Gastrocnemius medialis (tissue), 4 donors: ENCODE measurements at regions of chr7 and their contacts with region 1.

Region 1: GRCh38 chr7:73433924-73434700 is 534 bp downstream of the FZD9 start:
- DNase-seq: no peak
- ATAC-seq: peak; percentile 53 to 56
- H3K4me3 ChIP-seq: peak overlapping the region; percentile 37 to 58 (median 54)
- H3K27ac ChIP-seq: peak overlapping the region in 2 of 4 donors; percentile 72 to 83
- H3K4me1 ChIP-seq: peaks cover 10 to 23% of the 10 kb centered on the region in 2 donors
- H3K27me3 ChIP-seq: no peaks in the 10 kb centered on the region
- CTCF ChIP-seq: peak in 1 of 5 experiments; percentile 6
- POLR2A ChIP-seq: peak in 1 of 2 donors; percentile 53

Region 2: DNA sequence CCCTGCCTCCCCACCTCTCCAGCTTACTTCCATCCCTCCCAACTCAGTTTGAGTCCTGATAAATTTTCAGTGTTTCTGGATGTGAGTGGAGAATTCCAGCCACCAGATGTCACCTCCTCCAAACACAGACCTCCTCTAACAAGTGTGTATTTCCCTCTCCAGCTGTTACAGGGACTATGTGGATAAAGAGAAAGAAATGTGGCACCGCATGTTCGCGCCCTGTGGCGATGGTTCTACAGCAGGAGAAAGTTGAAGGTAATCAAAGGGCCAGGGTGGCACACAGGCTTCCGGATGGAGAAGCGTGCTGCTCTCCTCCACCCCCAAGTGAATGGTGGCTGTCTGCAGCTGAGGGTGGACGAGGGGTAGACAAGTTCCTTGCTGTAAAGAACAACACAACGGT is 91.5 kb before region 1 on chr7:
- in situ Hi-C with region 1: no loop called
- intact Hi-C with region 1: loop called (anchors 5 kb)
- DNase-seq: no peak
- ATAC-seq: peak; percentile 90 to 95
- H3K4me3 ChIP-seq: peak overlapping the region in 2 of 4 donors; percentile 18 to 37
- H3K27ac ChIP-seq: no peak overlapping the region
- H3K4me1 ChIP-seq: no peaks in the 10 kb centered on the region
- H3K27me3 ChIP-seq: no peaks in the 10 kb centered on the region
- CTCF ChIP-seq: peak; percentile 42 to 70 (median 66)
- POLR2A ChIP-seq: no peak

Region 3: DNA sequence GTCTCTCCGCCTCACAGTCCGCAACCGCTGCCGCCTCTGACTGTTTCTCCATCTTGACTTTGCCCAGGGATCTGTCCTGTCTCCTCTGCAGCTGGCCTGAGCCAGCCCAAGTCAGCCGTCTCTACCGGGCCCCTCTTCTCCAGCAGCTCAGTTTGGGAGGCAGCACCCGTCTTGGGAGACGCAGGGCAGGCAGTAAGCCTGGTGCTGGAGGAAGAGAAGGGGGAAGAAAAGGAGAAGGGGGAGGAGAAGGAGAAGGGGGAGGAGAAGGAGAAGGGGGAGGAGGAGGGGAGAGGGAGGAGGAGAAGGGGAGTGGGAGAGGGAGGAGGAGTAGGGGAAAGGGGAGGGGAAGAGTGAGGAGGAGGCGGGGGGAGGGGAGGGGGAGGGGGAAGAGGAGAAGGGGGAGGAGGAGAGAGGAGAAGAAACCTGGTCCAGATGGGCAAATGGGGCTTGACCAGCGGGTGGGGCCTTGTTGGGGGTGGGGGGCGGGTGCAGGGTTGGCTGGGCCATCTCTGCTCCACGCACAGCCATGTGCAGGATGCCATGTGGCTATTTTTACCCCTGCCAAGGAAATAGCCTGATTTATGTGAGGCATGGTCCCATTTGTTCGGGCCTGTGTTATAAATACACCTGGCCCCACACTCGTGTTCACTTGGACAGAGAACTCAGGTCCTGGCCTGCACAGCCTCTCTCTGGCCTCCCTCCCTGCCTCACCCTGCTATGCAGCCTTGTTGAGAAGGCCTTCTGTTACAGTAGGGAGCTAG is 36.4 kb before region 1 on chr7:
- in situ Hi-C with region 1: no loop called
- intact Hi-C with region 1: loop called (anchors 5 kb)
- DNase-seq: peak; percentile 90 to 91
- ATAC-seq: peak; percentile 89 to 91
- H3K4me3 ChIP-seq: peak overlapping the region; percentile 28 to 58 (median 50)
- H3K27ac ChIP-seq: peak overlapping the region; percentile 83 to 97 (median 90)
- H3K4me1 ChIP-seq: peaks cover 20 to 24% of the 10 kb centered on the region in 2 donors
- H3K27me3 ChIP-seq: no peaks in the 10 kb centered on the region
- CTCF ChIP-seq: no peak
- POLR2A ChIP-seq: peak; percentile 35 to 39